Breast epithelium (tissue), 4 donors: ENCODE measurements at regions of chr5 and their contacts with region 1.

Region 1: DNA sequence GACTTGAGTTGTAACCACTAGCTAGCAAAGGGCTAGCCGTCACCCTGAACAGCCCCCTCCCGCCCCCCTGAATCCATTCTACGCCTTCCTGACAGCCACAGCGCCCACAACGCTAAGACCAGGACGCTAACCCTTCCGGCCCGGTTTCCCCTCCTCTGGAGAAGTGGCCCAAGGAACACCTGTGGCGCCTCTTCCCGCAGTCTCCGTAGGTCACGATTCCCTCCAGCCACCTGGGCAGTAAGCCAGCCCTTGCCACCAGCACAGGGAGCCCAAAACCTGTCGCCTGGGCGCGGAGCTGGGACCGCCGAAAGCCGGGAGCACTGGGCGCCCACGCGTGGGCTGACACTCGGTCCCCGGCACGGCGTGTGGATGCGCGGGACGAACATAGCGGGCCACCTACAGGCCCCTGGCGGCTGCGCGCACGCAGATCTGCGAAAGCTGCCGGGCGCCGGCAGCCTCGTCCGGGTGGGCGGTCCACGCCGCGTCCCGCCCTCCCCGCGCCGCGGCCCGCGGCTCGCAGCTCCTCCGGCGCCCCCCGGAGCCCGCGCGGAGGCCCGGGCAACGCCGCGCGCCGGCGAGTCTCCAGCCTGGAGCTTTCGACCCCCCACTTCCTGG is 595 bp downstream of the IRF1 start:
- DNase-seq: peak in 1 of 2 donors; percentile 39
- H3K4me3 ChIP-seq: peak overlapping the region; percentile 67 to 97 (median 83)
- H3K27ac ChIP-seq: peak overlapping the region; percentile 95 to 96
- H3K4me1 ChIP-seq: peaks cover 8 to 28% of the 10 kb centered on the region in 2 donors
- H3K27me3 ChIP-seq: no peaks in the 10 kb centered on the region
- CTCF ChIP-seq: peak in 1 of 3 donors; percentile 24
- POLR2A ChIP-seq: no peak

Region 2: GRCh38 chr5:132426525-132427138 is 63.3 kb before region 1 on chr5:
- intact Hi-C with region 1: loop called (anchors 5 kb)
- DNase-seq: no peak
- H3K4me3 ChIP-seq: peak overlapping the region in 1 of 3 donors; percentile 19
- H3K27ac ChIP-seq: peak overlapping the region; percentile 81 to 84
- H3K4me1 ChIP-seq: peaks cover 15 to 24% of the 10 kb centered on the region in 2 donors
- H3K27me3 ChIP-seq: no peaks in the 10 kb centered on the region
- CTCF ChIP-seq: peak in 1 of 3 donors; percentile 18
- POLR2A ChIP-seq: no peak